ENCODE measurements at regions of chr2 and their contacts with region 1.

Region 1: GRCh38 chr2:216404010-216404618 is 8.2 kb upstream of the SMARCAL1 start:
- DNase-seq: peak; percentile 18
- H3K4me3 ChIP-seq: no peak overlapping the region
- H3K27ac ChIP-seq: no peak overlapping the region
- H3K4me1 ChIP-seq: no peaks in the 10 kb centered on the region
- H3K27me3 ChIP-seq: no peaks in the 10 kb centered on the region
- CTCF ChIP-seq: peak; percentile 87 to 91

Region 2: DNA sequence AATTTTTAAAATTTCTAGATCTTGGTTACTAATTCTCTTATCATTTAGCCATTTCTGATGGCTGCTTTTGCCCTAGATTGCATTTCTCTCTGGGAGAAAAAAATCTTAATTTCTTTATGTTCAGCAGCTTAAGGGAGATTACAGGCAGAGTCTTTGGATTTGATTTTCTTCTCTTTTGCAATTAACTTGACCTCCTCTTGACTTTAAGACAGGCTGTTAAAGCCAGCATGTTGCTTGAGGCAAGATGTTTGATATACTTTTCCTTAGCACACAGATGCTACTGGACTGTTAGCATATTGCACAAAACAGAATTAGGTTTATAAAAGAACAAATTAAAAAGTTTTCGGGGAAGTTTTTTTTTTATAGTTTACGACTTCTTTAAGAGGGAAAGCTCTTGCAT is 245.0 kb before region 1 on chr2:
- CTCF ChIA-PET with region 1: no interaction called
- dilution Hi-C with region 1: no loop called
- in situ Hi-C with region 1: no loop called
- intact Hi-C with region 1: loop called (anchors 5 kb)
- DNase-seq: no peak
- H3K4me3 ChIP-seq: no peak overlapping the region
- H3K27ac ChIP-seq: no peak overlapping the region
- H3K4me1 ChIP-seq: no peaks in the 10 kb centered on the region
- H3K27me3 ChIP-seq: no peaks in the 10 kb centered on the region
- CTCF ChIP-seq: no peak

Region 3: GRCh38 chr2:216222650-216223352 is 181.3 kb before region 1 on chr2:
- CTCF ChIA-PET with region 1: no interaction called
- dilution Hi-C with region 1: no loop called
- in situ Hi-C with region 1: no loop called
- intact Hi-C with region 1: loop called (anchors 2 kb)
- DNase-seq: peak; percentile 41
- H3K4me3 ChIP-seq: no peak overlapping the region
- H3K27ac ChIP-seq: no peak overlapping the region
- H3K4me1 ChIP-seq: peaks cover 28% of the 10 kb centered on the region
- H3K27me3 ChIP-seq: no peaks in the 10 kb centered on the region
- CTCF ChIP-seq: peak; percentile 19 to 48

Region 4: DNA sequence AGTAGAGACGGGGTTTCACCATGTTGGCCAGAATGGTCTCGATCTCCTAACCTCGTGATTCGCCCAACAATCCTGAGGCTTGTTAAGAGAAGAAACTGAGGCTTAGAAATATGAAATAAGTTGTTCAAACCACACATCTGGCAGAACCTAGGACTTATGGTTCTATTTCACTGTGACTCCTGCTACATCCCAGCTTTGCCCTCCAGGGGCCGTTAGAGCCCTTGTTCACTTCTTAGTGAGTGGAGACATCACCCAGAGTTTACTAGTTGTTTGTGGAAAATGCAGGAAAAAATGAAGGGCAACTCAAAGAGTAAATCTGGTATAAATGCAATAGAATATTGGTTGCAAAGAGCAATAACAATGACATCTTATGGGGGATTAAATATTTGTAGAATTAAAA is 75.8 kb before region 1 on chr2:
- CTCF ChIA-PET with region 1: interaction called, 3 read pairs
- dilution Hi-C with region 1: no loop called
- in situ Hi-C with region 1: no loop called
- intact Hi-C with region 1: loop called (anchors 1 kb)
- DNase-seq: no peak
- H3K4me3 ChIP-seq: no peak overlapping the region
- H3K27ac ChIP-seq: no peak overlapping the region
- H3K4me1 ChIP-seq: no peaks in the 10 kb centered on the region
- H3K27me3 ChIP-seq: no peaks in the 10 kb centered on the region
- CTCF ChIP-seq: peak; percentile 39 to 48

Region 5: GRCh38 chr2:216371756-216372702 is 32.1 kb before region 1 on chr2 and contains the start of gene MARCHF4:
- CTCF ChIA-PET with region 1: no interaction called
- dilution Hi-C with region 1: no loop called
- in situ Hi-C with region 1: no loop called
- intact Hi-C with region 1: loop called (anchors 2 kb)
- DNase-seq: peak; percentile 89
- H3K4me3 ChIP-seq: peak within 1 kb of the TSS; percentile 44 to 53 (median 47)
- H3K27ac ChIP-seq: no peak within 1 kb of the TSS
- H3K4me1 ChIP-seq: peaks cover 27% of the 10 kb centered on the region
- H3K27me3 ChIP-seq: peaks cover 12% of the 10 kb centered on the region
- CTCF ChIP-seq: no peak
- total RNA-seq, gene MARCHF4: under 0.01 to 4.6 TPM